CD14-positive monocyte (primary cell): ENCODE measurements at regions of chr22 and their contacts with region 1.

Region 1: GRCh38 chr22:22110548-22111266 is 128.1 kb upstream of the TOP3B start:
- DNase-seq: peak; percentile 80 to 85 (median 83)
- H3K4me3 ChIP-seq: no peak overlapping the region
- H3K4me3 Mint-ChIP-seq: no peak overlapping the region
- H3K27ac ChIP-seq: peak overlapping the region in 1 of 2 donors; percentile 75
- H3K27ac Mint-ChIP-seq: peak overlapping the region in 2 of 7 donors; percentile 58 to 64
- H3K4me1 ChIP-seq: peaks cover 17 to 33% of the 10 kb centered on the region in 2 donors
- H3K4me1 Mint-ChIP-seq: peaks cover 29% of the 10 kb centered on the region
- H3K27me3 ChIP-seq: no peaks in the 10 kb centered on the region
- H3K27me3 Mint-ChIP-seq: peaks cover 0 to 4% (median 2%) of the 10 kb centered on the region in 3 donors
- CTCF ChIP-seq: peak; percentile 79

Region 2: DNA sequence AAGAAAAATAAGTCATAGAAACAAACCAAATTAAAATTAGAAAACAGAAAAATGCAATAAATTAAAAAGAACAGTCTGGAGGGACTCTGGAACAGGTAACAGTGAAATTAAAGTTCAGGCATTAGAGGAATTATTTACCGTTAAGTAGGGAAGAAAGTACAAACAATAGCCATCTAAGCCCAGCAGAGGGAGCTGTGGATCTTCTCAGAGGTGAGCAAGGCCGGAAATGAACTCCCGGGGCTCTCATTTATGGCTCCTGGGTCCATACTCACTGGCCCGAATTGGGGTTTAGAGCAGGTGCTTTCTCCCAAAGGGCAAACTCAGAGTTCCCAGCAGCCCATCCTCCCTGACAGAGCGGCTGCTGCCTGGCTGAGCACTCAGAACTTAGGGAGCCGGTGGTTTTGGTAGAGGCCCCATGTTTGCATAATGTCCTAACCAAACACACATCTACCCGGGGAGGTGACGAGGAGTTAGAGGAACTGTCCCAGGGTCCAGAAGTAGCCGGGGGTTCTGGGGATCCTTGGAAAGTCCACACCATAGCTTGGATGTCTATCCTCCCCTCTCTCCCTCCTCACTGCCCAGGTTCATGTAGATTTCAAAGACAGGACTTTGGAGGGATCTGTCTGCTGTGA is 46.1 kb after region 1 on chr22:
- intact Hi-C with region 1: loop called in 1 of 2 experiments (anchors 2 kb)
- DNase-seq: peak; percentile 68 to 80 (median 77)
- H3K4me3 ChIP-seq: peak overlapping the region in 1 of 3 experiments; percentile 53
- H3K4me3 Mint-ChIP-seq: peak overlapping the region; percentile 39 to 75
- H3K27ac ChIP-seq: peak overlapping the region in 1 of 2 donors; percentile 69
- H3K27ac Mint-ChIP-seq: peak overlapping the region in 4 of 7 donors; percentile 48 to 74 (median 66)
- H3K4me1 ChIP-seq: peaks cover 40 to 52% of the 10 kb centered on the region in 2 donors
- H3K4me1 Mint-ChIP-seq: peaks cover 48% of the 10 kb centered on the region
- H3K27me3 ChIP-seq: no peaks in the 10 kb centered on the region
- H3K27me3 Mint-ChIP-seq: peaks cover 0 to 2% (median 2%) of the 10 kb centered on the region in 3 donors
- CTCF ChIP-seq: peak; percentile 84

Region 3: GRCh38 chr22:22167791-22168189 is 57.1 kb after region 1 on chr22:
- intact Hi-C with region 1: no loop called
- DNase-seq: no peak
- H3K4me3 ChIP-seq: peak overlapping the region in 1 of 3 experiments; percentile 30
- H3K4me3 Mint-ChIP-seq: no peak overlapping the region
- H3K27ac ChIP-seq: no peak overlapping the region
- H3K27ac Mint-ChIP-seq: peak overlapping the region in 1 of 7 donors; percentile 60
- H3K4me1 ChIP-seq: peaks cover 10 to 11% of the 10 kb centered on the region in 2 donors
- H3K4me1 Mint-ChIP-seq: peaks cover 16% of the 10 kb centered on the region
- H3K27me3 ChIP-seq: peaks cover 0 to 2% of the 10 kb centered on the region in 2 donors
- H3K27me3 Mint-ChIP-seq: peaks cover 5 to 7% (median 5%) of the 10 kb centered on the region in 3 donors
- CTCF ChIP-seq: no peak